B cell (primary cell): ENCODE measurements at regions of chr2 and their contacts with region 1.

Region 1: DNA sequence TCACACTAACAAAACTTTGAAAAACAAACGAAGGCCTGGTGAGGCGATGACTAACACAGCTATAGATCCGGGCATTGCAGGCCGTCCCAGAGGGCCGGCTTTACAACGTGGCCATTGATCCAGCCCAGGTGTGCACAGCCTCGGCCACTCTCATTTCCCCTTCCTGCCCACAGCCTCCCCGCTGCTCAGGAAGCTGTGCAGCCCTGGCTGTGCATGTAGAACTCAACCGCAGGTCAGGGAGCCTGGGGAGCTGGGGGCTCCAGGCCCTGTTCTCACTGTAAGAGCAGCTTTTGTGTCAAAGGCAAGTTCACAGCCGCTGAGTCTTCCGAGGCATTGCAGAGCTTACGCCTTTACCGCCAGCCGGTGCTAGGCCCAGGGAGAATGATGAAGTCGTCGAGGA is 87.2 kb downstream of the LONRF2 start:
- DNase-seq: peak; percentile 84
- ATAC-seq: peak; percentile 91
- H3K4me3 ChIP-seq: peak overlapping the region in 2 of 5 experiments; percentile 2 to 21
- H3K4me3 Mint-ChIP-seq: peak overlapping the region; percentile 81
- H3K27ac ChIP-seq: peak overlapping the region; percentile 56 to 79
- H3K27ac Mint-ChIP-seq: peak overlapping the region; percentile 94
- H3K4me1 ChIP-seq: peaks cover 51 to 54% of the 10 kb centered on the region in 2 donors
- H3K4me1 Mint-ChIP-seq: peaks cover 61% of the 10 kb centered on the region
- H3K27me3 ChIP-seq: no peaks in the 10 kb centered on the region
- H3K27me3 Mint-ChIP-seq: no peaks in the 10 kb centered on the region
- CTCF ChIP-seq: no peak

Region 2: DNA sequence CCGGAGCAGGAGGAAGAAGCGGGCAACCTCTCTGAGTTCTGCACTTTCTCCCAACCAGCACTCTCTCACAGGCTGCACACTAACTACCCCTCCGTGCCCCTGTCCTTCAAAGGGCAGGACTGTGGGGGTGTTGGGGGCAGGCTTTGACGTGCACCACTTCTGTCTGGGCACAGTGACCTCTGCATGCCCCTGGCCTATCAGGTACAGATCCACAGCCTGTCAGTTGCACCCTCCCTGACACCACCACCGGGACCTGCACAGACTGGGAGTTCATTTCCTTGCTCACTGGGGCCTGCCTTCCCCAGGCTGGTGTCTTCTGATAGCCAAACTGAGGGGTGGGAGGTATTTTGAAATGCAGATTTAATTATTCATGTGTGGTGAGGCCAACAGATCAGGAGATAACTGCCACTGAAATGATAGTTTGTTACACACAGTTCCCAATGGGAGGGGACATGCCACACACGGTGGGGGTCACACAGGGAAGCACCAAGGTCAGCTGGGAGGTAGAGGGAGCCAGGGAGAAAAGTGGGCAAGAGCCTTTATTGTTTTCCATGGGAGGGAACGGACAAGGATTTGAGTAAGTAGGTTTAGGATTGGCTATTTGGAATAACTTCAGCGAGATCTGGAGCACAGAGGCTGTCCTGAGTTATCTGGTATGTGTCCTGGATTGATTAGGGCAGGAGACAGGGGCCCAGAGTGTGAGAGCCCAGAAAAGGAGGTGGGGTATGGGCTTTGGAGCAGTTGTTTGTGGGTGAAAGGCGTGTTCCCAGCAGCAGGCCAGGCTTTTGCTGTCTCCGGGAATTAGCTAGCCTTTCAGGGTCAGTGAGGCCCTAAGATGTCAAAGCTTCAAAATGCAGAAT is 344.3 kb before region 1 on chr2:
- CTCF ChIA-PET with region 1: no interaction called
- POLR2A ChIA-PET with region 1: no interaction called
- intact Hi-C with region 1: no loop called
- DNase-seq: no peak
- ATAC-seq: no peak
- H3K4me3 ChIP-seq: no peak overlapping the region
- H3K4me3 Mint-ChIP-seq: no peak overlapping the region
- H3K27ac ChIP-seq: no peak overlapping the region
- H3K27ac Mint-ChIP-seq: peak overlapping the region; percentile 11
- H3K4me1 ChIP-seq: no peaks in the 10 kb centered on the region
- H3K4me1 Mint-ChIP-seq: peaks cover 4% of the 10 kb centered on the region
- H3K27me3 ChIP-seq: no peaks in the 10 kb centered on the region
- H3K27me3 Mint-ChIP-seq: no peaks in the 10 kb centered on the region
- CTCF ChIP-seq: no peak

Region 3: DNA sequence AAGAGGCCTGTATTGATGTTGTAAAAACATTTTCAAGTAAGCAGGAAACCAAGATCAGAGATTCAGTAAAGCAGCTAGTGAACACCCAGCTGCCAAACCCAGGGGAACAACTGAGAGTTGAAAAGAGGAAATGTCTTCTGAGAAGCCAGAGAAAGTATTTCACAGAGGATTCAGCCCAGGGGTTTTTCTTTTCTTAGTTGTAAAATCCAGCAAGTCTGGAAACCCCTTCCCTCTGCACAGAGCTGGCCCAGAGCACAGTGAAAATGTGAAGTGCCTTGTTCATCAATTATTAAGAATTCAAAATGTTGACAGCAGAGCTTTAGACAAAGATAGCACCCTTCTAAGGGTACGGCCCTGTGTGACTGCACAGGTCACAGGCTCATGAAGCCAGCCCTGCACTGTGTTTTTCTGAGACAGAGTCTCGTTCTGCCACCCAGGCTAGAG is 121.1 kb before region 1 on chr2:
- CTCF ChIA-PET with region 1: interaction called, 17 read pairs
- POLR2A ChIA-PET with region 1: interaction called, 15 read pairs
- intact Hi-C with region 1: loop called (anchors 1 kb)
- DNase-seq: peak; percentile 74
- ATAC-seq: peak; percentile 50
- H3K4me3 ChIP-seq: peak overlapping the region in 3 of 5 experiments; percentile 16 to 39 (median 25)
- H3K4me3 Mint-ChIP-seq: peak overlapping the region; percentile 78
- H3K27ac ChIP-seq: peak overlapping the region; percentile 72 to 84
- H3K27ac Mint-ChIP-seq: peak overlapping the region; percentile 93
- H3K4me1 ChIP-seq: peaks cover 62 to 67% of the 10 kb centered on the region in 2 donors
- H3K4me1 Mint-ChIP-seq: peaks cover 81% of the 10 kb centered on the region
- H3K27me3 ChIP-seq: no peaks in the 10 kb centered on the region
- H3K27me3 Mint-ChIP-seq: no peaks in the 10 kb centered on the region
- CTCF ChIP-seq: no peak

Region 4: GRCh38 chr2:100188326-100188725 is 46.8 kb before region 1 on chr2:
- CTCF ChIA-PET with region 1: no interaction called
- POLR2A ChIA-PET with region 1: no interaction called
- intact Hi-C with region 1: no loop called
- DNase-seq: no peak
- ATAC-seq: no peak
- H3K4me3 ChIP-seq: no peak overlapping the region
- H3K4me3 Mint-ChIP-seq: no peak overlapping the region
- H3K27ac ChIP-seq: no peak overlapping the region
- H3K27ac Mint-ChIP-seq: no peak overlapping the region
- H3K4me1 ChIP-seq: no peaks in the 10 kb centered on the region
- H3K4me1 Mint-ChIP-seq: peaks cover 4% of the 10 kb centered on the region
- H3K27me3 ChIP-seq: no peaks in the 10 kb centered on the region
- H3K27me3 Mint-ChIP-seq: peaks cover 10% of the 10 kb centered on the region
- CTCF ChIP-seq: no peak